Heart left ventricle (tissue), 16 donors: ENCODE measurements at regions of chr17 and their contacts with region 1.

Region 1: DNA sequence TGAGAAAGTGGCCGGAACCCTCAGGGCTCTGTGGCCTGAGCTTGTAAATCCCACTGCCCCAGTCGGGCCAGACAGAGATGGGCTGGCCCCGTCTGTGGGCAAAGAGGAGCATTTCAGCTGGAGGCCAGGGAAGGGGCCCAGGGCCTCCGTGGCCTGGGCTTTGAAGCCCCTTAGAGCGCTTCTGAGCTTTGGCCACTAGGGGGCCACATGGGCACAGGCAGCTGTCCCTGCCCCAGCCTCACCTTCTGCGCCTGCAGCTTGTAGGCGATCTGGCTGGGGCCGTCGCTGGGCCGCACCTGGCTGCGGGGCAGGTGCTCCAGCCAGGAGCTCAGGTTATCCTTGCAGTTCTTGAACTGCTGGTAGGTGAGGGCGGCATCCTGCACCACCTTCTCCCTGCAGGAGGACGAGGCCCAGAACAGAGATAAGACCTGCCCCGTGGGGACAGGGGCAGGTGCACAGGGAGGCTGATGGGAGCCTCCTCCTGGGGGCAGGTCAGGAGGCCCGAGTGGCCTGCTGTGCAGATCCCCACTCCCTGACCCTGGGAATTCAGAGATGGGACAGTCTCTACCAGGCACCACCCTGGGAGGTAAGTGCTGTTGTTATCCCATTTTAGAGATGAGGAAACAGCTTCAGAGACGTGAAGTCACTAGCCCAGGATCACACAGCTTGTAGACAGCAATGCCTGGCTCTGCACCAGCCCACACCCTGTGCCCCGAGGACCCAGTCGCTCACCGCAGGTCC is 12.8 kb downstream of the EVPL start:
- DNase-seq: peak; percentile 55 to 86 (median 67)
- ATAC-seq: peak; percentile 76 to 90 (median 80)
- H3K4me3 ChIP-seq: no peak overlapping the region
- H3K27ac ChIP-seq: no peak overlapping the region
- H3K4me1 ChIP-seq: peaks cover 0 to 6% (median 1%) of the 10 kb centered on the region in 12 donors
- H3K27me3 ChIP-seq: no peaks in the 10 kb centered on the region
- CTCF ChIP-seq: peak; percentile 86 to 99 (median 96)
- POLR2A ChIP-seq: no peak

Region 2: GRCh38 chr17:75896415-75897159 is 117.8 kb before region 1 on chr17 and contains the start of gene TRIM65:
- intact Hi-C with region 1: no loop called
- DNase-seq: peak; percentile 88 to 94 (median 90)
- ATAC-seq: peak; percentile 61 to 87 (median 85)
- H3K4me3 ChIP-seq: peak within 1 kb of the TSS; percentile 48 to 97 (median 80)
- H3K27ac ChIP-seq: peak within 1 kb of the TSS; percentile 88 to 99 (median 94)
- H3K4me1 ChIP-seq: peaks cover 0 to 32% (median 24%) of the 10 kb centered on the region in 12 donors
- H3K27me3 ChIP-seq: no peaks in the 10 kb centered on the region
- CTCF ChIP-seq: peak in 11 of 12 donors; percentile 28 to 73 (median 55)
- POLR2A ChIP-seq: peak in 1 of 2 donors; percentile 84
- total RNA-seq, gene TRIM65: 6.8 to 16.1 (median 9.5) TPM

Region 3: DNA sequence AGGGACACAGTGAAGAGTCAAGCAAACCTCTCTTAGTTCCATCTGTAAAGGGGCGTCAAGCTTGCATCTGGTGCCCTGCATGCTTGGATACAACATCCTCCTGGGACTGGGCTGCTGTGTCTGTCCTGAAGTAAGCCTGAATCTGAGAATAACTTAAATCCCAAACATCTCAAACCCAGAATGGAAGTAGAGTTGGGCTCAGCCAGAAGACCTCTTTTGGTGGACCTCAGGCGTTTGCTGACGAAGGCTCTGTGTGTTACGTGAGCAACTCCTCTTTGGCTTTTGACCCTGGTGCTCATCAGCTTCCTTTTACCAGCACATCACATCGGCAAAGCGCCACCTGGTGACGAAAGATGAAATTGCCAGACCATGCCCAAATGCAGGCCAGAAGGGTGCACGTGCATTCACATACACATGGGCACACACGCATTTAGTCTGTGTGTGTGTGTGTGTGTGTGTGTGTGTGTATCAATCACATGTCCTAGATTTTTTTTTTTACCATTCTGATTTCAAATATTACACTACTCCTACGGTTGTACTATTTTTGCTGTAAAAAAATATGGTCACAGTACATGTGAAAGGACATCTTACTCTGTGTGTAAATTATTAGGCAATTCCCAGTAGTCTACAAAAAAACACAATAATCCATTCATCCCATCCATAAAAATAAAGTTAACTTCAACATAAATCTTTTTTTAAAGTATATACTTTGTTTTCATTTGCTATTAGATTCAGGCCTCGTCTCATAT is 167.8 kb after region 1 on chr17:
- intact Hi-C with region 1: loop called in 2 of 10 experiments (anchors 10 kb)
- DNase-seq: peak; percentile 82 to 87 (median 84)
- ATAC-seq: peak in 3 of 4 donors; percentile 83 to 94 (median 89)
- H3K4me3 ChIP-seq: no peak overlapping the region
- H3K27ac ChIP-seq: no peak overlapping the region
- H3K4me1 ChIP-seq: peaks cover 0 to 13% (median 4%) of the 10 kb centered on the region in 12 donors
- H3K27me3 ChIP-seq: no peaks in the 10 kb centered on the region
- CTCF ChIP-seq: peak; percentile 78 to 92 (median 88)
- POLR2A ChIP-seq: no peak

Region 4: GRCh38 chr17:76278952-76279741 is 264.8 kb after region 1 on chr17:
- intact Hi-C with region 1: loop called in 3 of 10 experiments (anchors 5 to 10 kb)
- DNase-seq: peak; percentile 81 to 94 (median 85)
- ATAC-seq: peak; percentile 81 to 93 (median 87)
- H3K4me3 ChIP-seq: peak overlapping the region in 1 of 12 donors; percentile 2
- H3K27ac ChIP-seq: no peak overlapping the region
- H3K4me1 ChIP-seq: peaks cover 0 to 20% (median 5%) of the 10 kb centered on the region in 12 donors
- H3K27me3 ChIP-seq: no peaks in the 10 kb centered on the region
- CTCF ChIP-seq: peak; percentile 95 to 100 (median 99)
- POLR2A ChIP-seq: no peak

Region 5: GRCh38 chr17:76296186-76296585 is 281.8 kb after region 1 on chr17:
- intact Hi-C with region 1: loop called in 6 of 10 experiments (anchors 5 kb)
- DNase-seq: no peak
- ATAC-seq: peak; percentile 15 to 63 (median 49)
- H3K4me3 ChIP-seq: no peak overlapping the region
- H3K27ac ChIP-seq: no peak overlapping the region
- H3K4me1 ChIP-seq: peaks cover 0 to 15% (median 5%) of the 10 kb centered on the region in 12 donors
- H3K27me3 ChIP-seq: no peaks in the 10 kb centered on the region
- CTCF ChIP-seq: no peak
- POLR2A ChIP-seq: no peak